ENCODE measurements at regions of chr1 and their contacts with region 1.

Region 1: GRCh38 chr1:208182880-208183645 is 61.1 kb downstream of the PLXNA2 start:
- DNase-seq: no peak
- CTCF ChIP-seq: no peak

Region 2: GRCh38 chr1:208198236-208198635 is 15.2 kb after region 1 on chr1:
- CTCF ChIA-PET with region 1: interaction called, 11 read pairs
- POLR2A ChIA-PET with region 1: no interaction called
- DNase-seq: no peak
- CTCF ChIP-seq: no peak

Measured in GM10248 (cell line).